Natural killer cell (primary cell): ENCODE measurements at regions of chr1 and their contacts with region 1.

Region 1: GRCh38 chr1:155084722-155085503 is 6.3 kb downstream of the EFNA3 start:
- DNase-seq: peak; percentile 92 to 95
- ATAC-seq: peak; percentile 75 to 91 (median 80)
- H3K4me3 ChIP-seq: peak overlapping the region; percentile 61
- H3K4me3 Mint-ChIP-seq: peak overlapping the region; percentile 94
- H3K27ac ChIP-seq: peak overlapping the region; percentile 88
- H3K27ac Mint-ChIP-seq: peak overlapping the region; percentile 87 to 96
- H3K4me1 ChIP-seq: peaks cover 53% of the 10 kb centered on the region
- H3K4me1 Mint-ChIP-seq: peaks cover 30 to 51% of the 10 kb centered on the region in 2 donors
- H3K27me3 ChIP-seq: peaks cover 43% of the 10 kb centered on the region
- H3K27me3 Mint-ChIP-seq: peaks cover 16 to 24% of the 10 kb centered on the region in 2 donors
- CTCF ChIP-seq: peak; percentile 89

Region 2: GRCh38 chr1:155001675-155002463 is 83.0 kb before region 1 on chr1:
- intact Hi-C with region 1: no loop called
- DNase-seq: peak; percentile 97 to 98
- ATAC-seq: peak; percentile 80 to 93 (median 89)
- H3K4me3 ChIP-seq: peak overlapping the region; percentile 75
- H3K4me3 Mint-ChIP-seq: peak overlapping the region; percentile 95
- H3K27ac ChIP-seq: peak overlapping the region; percentile 94
- H3K27ac Mint-ChIP-seq: peak overlapping the region; percentile 82 to 92
- H3K4me1 ChIP-seq: peaks cover 78% of the 10 kb centered on the region
- H3K4me1 Mint-ChIP-seq: peaks cover 30 to 66% of the 10 kb centered on the region in 2 donors
- H3K27me3 ChIP-seq: no peaks in the 10 kb centered on the region
- H3K27me3 Mint-ChIP-seq: no peaks in the 10 kb centered on the region
- CTCF ChIP-seq: no peak

Region 3: DNA sequence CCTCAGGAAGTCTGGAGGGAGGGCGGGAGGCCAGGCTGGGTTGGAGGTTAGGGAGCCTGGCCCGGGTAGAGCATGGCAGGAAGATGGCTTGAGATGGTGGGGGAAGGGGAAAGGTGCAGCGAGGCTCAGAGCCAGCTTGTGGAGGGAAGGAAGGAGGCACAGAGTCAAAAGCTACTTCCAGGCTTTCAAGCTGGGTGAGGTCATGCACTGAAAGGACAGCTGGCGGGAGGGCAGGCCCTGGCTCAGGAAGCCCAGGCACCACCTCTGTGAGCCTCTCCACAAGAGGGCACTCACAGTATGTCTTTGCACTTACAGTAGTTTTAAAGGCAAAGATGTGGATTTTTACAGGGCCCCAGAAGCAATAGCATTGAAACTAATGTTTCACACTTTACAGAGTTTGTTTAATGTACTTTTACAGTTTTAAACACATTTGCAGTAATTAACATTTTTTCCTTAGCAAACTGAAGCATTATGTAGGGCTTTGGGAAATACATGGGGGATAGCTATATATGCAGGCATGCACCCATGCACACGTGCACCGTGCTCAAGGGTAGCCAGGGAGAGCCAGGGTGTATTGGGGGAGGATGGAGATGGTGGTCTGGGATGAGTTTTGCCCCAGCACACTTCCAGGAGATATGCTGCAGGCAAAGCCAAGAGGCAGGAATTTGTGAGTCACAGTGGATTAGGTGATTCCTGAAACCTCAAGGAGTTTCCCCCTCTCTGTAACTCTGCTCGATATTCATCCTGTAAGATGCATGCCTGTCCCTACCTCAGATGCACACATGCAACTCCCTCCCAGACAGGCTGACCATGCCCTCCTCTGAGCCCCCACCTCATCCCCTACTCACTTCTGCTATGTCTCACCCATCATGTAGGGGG is 39.9 kb before region 1 on chr1:
- intact Hi-C with region 1: loop called (anchors 1 kb)
- DNase-seq: peak; percentile 38 to 81
- ATAC-seq: peak; percentile 83 to 99 (median 97)
- H3K4me3 ChIP-seq: no peak overlapping the region
- H3K4me3 Mint-ChIP-seq: no peak overlapping the region
- H3K27ac ChIP-seq: no peak overlapping the region
- H3K27ac Mint-ChIP-seq: no peak overlapping the region
- H3K4me1 ChIP-seq: peaks cover 3% of the 10 kb centered on the region
- H3K4me1 Mint-ChIP-seq: peaks cover 6 to 13% of the 10 kb centered on the region in 2 donors
- H3K27me3 ChIP-seq: no peaks in the 10 kb centered on the region
- H3K27me3 Mint-ChIP-seq: peaks cover 0 to 3% of the 10 kb centered on the region in 2 donors
- CTCF ChIP-seq: peak; percentile 70

Region 4: GRCh38 chr1:155070721-155071569 is 14.0 kb before region 1 on chr1:
- intact Hi-C with region 1: loop called (anchors 2 kb)
- DNase-seq: peak; percentile 74 to 89
- ATAC-seq: peak; percentile 94 to 98 (median 98)
- H3K4me3 ChIP-seq: peak overlapping the region; percentile 26
- H3K4me3 Mint-ChIP-seq: peak overlapping the region; percentile 72
- H3K27ac ChIP-seq: peak overlapping the region; percentile 10
- H3K27ac Mint-ChIP-seq: peak overlapping the region in 1 of 2 donors; percentile 33
- H3K4me1 ChIP-seq: peaks cover 37% of the 10 kb centered on the region
- H3K4me1 Mint-ChIP-seq: peaks cover 6 to 40% of the 10 kb centered on the region in 2 donors
- H3K27me3 ChIP-seq: no peaks in the 10 kb centered on the region
- H3K27me3 Mint-ChIP-seq: no peaks in the 10 kb centered on the region
- CTCF ChIP-seq: peak; percentile 59

Region 5: DNA sequence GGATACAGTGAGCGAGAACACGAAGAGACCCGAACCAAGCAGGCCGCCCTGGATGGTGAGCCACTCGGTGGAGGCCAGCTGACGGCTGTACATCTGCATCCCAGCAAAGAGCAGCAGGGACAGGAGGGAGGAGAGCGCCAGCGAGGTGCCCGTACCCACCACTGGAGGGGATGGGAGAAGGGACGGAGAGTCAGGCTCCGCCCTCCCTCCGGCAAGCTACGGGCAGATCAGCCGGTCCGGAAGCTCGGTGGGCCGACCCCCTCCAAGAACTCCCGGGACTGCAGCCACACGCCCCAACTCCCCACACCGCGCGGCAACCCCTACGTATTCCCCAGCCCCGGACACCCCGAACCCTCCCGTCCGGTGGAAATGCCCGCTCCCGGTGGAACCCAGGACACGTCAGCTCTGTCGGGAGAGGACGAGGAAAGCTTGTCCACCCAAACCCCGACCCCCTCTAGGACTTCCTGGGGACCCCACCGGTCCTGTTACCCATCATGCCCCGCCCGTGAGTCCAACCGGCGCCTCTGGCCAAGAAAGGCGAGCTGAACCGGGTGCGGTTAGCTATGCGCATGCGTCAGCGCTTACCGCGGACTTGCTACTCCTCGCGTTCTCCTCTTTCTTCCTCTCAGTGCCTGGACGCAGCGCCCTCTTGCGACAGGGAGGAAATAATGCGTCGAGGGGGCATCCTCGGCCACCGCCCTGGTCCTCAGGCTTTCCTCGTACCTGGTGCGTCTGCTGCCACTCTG is 88.0 kb after region 1 on chr1 and contains the start of gene KRTCAP2:
- intact Hi-C with region 1: loop called (anchors 2 kb)
- DNase-seq: peak; percentile 89 to 98
- ATAC-seq: peak; percentile 82 to 93 (median 85)
- H3K4me3 ChIP-seq: peak within 1 kb of the TSS; percentile 68
- H3K4me3 Mint-ChIP-seq: peak within 1 kb of the TSS; percentile 95
- H3K27ac ChIP-seq: peak within 1 kb of the TSS; percentile 89
- H3K27ac Mint-ChIP-seq: peak within 1 kb of the TSS; percentile 95 to 99
- H3K4me1 ChIP-seq: peaks cover 34% of the 10 kb centered on the region
- H3K4me1 Mint-ChIP-seq: peaks cover 28 to 41% of the 10 kb centered on the region in 2 donors
- H3K27me3 ChIP-seq: no peaks in the 10 kb centered on the region
- H3K27me3 Mint-ChIP-seq: peaks cover 0 to 5% of the 10 kb centered on the region in 2 donors
- CTCF ChIP-seq: peak; percentile 94
- total RNA-seq, gene KRTCAP2: 95.3 to 113 (median 104) TPM